ENCODE measurements at regions of chr2 and their contacts with region 1.

Region 1: DNA sequence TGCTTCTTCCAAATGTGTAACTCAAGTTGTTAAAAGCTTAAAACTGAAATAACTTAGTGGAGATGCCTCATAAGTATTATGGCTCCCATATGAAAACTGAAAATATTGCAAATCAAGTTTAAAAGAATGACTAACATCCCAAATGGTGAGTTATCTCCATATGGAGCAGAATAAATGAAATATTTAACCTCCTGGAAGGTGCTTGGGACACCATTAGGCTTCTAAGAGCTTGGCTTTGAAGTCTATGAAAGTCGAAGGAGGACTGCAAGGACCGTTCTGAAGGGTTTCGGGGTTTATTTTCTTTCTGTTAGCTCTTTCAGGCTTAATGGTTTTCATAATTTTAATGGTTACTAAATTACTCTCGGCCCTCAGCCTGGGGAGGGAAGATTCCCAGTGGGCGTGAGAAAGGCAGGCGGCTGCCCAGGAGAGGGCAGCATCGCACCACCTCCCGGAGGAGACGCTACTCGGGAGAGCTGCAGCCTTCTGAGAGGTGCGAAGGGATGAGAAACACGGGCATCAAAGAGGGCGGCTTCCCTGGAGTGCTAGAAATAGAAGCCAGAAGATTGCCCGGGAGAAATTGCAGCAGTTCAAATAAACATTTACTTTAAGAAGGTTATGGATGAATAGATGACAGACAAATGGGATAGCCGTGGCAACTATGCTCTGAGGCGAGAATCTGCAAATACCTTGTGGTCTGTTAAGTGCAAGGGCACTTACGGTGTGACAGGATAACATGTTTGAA is 43.1 kb downstream of the MAP3K19 start:
- DNase-seq: peak; percentile 18
- H3K4me3 ChIP-seq: peak overlapping the region; percentile 37
- H3K27ac ChIP-seq: no peak overlapping the region
- H3K27me3 ChIP-seq: peaks cover 15% of the 10 kb centered on the region
- CTCF ChIP-seq: peak; percentile 99

Region 2: GRCh38 chr2:135023886-135024485 is 19.8 kb after region 1 on chr2:
- CTCF ChIA-PET with region 1: interaction called, 17 read pairs
- POLR2A ChIA-PET with region 1: no interaction called
- DNase-seq: no peak
- H3K4me3 ChIP-seq: no peak overlapping the region
- H3K27ac ChIP-seq: no peak overlapping the region
- H3K27me3 ChIP-seq: peaks cover 5% of the 10 kb centered on the region
- CTCF ChIP-seq: no peak

Region 3: GRCh38 chr2:135531231-135532228 is 527.4 kb after region 1 on chr2 and contains the start of gene R3HDM1:
- CTCF ChIA-PET with region 1: interaction called, 23 read pairs
- POLR2A ChIA-PET with region 1: no interaction called
- DNase-seq: peak; percentile 100
- H3K4me3 ChIP-seq: peak within 1 kb of the TSS; percentile 85
- H3K27ac ChIP-seq: peak within 1 kb of the TSS; percentile 97
- H3K27me3 ChIP-seq: no peaks in the 10 kb centered on the region
- CTCF ChIP-seq: no peak
- polyA plus RNA-seq, gene R3HDM1: 33.2 and 39.1 TPM in 2 replicates

Region 4: GRCh38 chr2:135600915-135601314 is 596.7 kb after region 1 on chr2:
- CTCF ChIA-PET with region 1: interaction called, 43 read pairs
- POLR2A ChIA-PET with region 1: no interaction called
- DNase-seq: no peak
- H3K4me3 ChIP-seq: no peak overlapping the region
- H3K27ac ChIP-seq: no peak overlapping the region
- H3K27me3 ChIP-seq: no peaks in the 10 kb centered on the region
- CTCF ChIP-seq: 0 out of 2 replicates have a peak, but pooled peaks have one; percentile 27

Region 5: GRCh38 chr2:135703300-135703699 is 699.1 kb after region 1 on chr2:
- CTCF ChIA-PET with region 1: interaction called, 125 read pairs
- POLR2A ChIA-PET with region 1: no interaction called
- DNase-seq: no peak
- H3K4me3 ChIP-seq: no peak overlapping the region
- H3K27ac ChIP-seq: no peak overlapping the region
- H3K27me3 ChIP-seq: no peaks in the 10 kb centered on the region
- CTCF ChIP-seq: no peak

Region 6: GRCh38 chr2:135797497-135798274 is 793.5 kb after region 1 on chr2:
- CTCF ChIA-PET with region 1: interaction called, 19 read pairs
- POLR2A ChIA-PET with region 1: no interaction called
- DNase-seq: peak; percentile 61
- H3K4me3 ChIP-seq: no peak overlapping the region
- H3K27ac ChIP-seq: no peak overlapping the region
- H3K27me3 ChIP-seq: no peaks in the 10 kb centered on the region
- CTCF ChIP-seq: peak; percentile 94

Measured in AG04450 (cell line).